Motor neuron (in vitro differentiated cells): ENCODE measurements at regions of chr10 and their contacts with region 1.

Region 1: GRCh38 chr10:98486421-98486820 is 39.7 kb upstream of the HPS1 start:
- ATAC-seq: peak in 2 of 8 experiments; percentile 69 to 73
- H3K4me3 ChIP-seq: no peak overlapping the region
- H3K27ac ChIP-seq: no peak overlapping the region
- H3K4me1 ChIP-seq: no peaks in the 10 kb centered on the region

Region 2: DNA sequence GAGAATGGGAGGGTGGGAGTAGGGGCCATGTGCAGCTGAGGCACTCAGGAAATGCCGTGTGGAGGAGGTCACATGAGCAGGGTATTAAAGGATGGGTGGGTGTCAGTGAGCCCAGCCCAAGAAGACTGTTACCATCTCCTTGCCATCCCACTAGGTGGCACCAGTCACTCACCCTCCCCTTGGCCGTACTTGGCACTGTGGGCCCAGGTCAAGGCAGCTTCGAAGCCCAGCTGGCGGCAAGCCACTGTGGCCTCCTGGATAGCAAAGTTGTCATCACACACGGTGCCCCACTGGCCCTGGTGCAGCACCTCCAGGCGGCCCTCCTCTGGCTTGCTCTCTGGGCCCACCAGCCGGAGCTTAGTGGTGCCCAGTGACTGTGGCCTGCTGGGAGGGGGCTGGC is 223.8 kb before region 1 on chr10:
- in situ Hi-C with region 1: no loop called
- ATAC-seq: peak in 3 of 8 experiments; percentile 22 to 42 (median 27)
- H3K4me3 ChIP-seq: no peak overlapping the region
- H3K27ac ChIP-seq: no peak overlapping the region
- H3K4me1 ChIP-seq: peaks cover 14% of the 10 kb centered on the region in 2 donors

Region 3: GRCh38 chr10:98664331-98665042 is 178.1 kb after region 1 on chr10:
- in situ Hi-C with region 1: loop called in 1 of 9 experiments (anchors 25 kb)
- ATAC-seq: peak in 2 of 8 experiments; percentile 50 to 68
- H3K4me3 ChIP-seq: no peak overlapping the region
- H3K27ac ChIP-seq: no peak overlapping the region
- H3K4me1 ChIP-seq: no peaks in the 10 kb centered on the region